Astrocyte of the cerebellum (primary cell): ENCODE measurements at regions of chr19 and their contacts with region 1.

Region 1: DNA sequence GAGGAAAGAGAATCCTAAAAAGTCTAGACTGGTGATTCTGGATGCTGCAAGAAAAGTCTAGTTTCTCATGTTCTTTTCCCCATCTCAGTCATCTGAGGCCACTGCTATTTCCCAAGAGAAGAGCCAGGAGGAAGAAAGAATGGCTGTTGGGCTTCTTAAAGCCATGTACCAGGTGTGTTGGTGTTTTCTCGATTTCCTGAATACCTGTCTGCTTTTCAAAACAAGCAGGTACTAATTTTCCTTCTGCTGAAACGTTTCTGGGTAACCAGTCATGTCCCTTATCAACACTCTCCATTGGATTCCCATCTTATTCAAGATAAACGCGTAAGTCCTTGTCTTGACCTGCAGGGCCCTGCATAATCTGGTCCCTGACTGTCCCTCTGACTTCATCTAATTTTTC is 1.1 kb downstream of the ZNF570 start:
- DNase-seq: no peak
- H3K4me3 ChIP-seq: peak overlapping the region; percentile 97
- CTCF ChIP-seq: no peak

Region 2: GRCh38 chr19:37506387-37507166 is 36.4 kb after region 1 on chr19 and contains the start of gene ZNF793:
- in situ Hi-C with region 1: no loop called
- DNase-seq: peak; percentile 54
- H3K4me3 ChIP-seq: peak within 1 kb of the TSS; percentile 69
- CTCF ChIP-seq: no peak

Region 3: GRCh38 chr19:37572203-37572602 is 102.0 kb after region 1 on chr19:
- in situ Hi-C with region 1: loop called (anchors 5 kb)
- DNase-seq: no peak
- H3K4me3 ChIP-seq: no peak overlapping the region
- CTCF ChIP-seq: no peak